Common myeloid progenitor, CD34-positive (primary cell): ENCODE measurements at regions of chrX and their contacts with region 1.

Region 1: DNA sequence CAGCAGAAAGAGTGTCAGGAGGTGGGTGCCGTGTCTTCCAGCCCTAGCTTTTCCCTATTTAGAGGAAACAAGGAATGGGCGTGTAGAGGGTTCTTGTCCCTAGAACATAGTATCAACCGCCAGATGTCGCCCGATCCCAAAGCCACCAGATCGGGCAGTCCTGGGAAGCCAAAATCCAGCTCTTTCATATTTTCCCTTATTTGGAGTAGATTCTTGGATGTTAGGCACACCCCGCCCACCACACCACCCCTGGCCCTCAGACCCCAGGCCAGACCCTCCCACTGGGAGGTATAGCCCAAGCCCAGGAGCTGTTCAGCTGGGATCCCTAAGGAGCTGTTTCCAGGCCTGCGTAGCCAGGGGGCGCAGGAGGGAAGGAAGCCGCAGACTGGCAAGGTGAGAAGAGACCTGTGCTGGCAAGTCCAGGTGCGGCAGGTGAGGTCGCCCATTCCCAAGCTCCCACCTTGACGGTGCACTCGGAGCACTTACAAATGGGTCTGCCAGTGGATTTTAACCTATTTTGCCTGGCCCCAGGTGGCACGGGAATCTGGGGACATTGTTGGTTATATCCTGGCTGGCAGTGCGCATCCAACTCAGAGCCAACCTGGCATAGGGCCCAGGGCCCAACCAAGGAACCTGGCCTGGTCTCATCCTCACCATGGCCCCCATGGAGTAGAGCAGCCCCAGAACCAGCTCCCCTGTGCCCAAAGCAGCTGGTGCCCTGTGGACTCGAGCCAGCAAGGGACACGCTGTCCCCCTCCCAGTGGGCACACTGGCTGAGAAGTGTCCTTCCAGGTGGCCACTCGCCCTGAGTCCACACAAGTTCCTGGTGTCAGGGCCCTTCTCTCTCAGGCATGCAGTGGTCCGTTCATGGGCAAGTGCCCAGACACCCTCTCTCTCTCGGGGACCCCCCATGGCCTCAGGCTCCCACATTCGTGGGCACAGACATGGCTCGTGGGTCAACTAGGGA is 811 bp downstream of the FLNA start:
- DNase-seq: peak in 2 of 3 donors; percentile 35 to 42
- H3K4me3 ChIP-seq: peak overlapping the region in 3 of 7 experiments; percentile 15 to 61 (median 35)
- H3K27ac ChIP-seq: no peak overlapping the region
- H3K4me1 ChIP-seq: peaks cover 3 to 49% (median 37%) of the 10 kb centered on the region in 4 experiments
- H3K27me3 ChIP-seq: peaks cover 0 to 14% (median 0%) of the 10 kb centered on the region in 5 experiments

Region 2: DNA sequence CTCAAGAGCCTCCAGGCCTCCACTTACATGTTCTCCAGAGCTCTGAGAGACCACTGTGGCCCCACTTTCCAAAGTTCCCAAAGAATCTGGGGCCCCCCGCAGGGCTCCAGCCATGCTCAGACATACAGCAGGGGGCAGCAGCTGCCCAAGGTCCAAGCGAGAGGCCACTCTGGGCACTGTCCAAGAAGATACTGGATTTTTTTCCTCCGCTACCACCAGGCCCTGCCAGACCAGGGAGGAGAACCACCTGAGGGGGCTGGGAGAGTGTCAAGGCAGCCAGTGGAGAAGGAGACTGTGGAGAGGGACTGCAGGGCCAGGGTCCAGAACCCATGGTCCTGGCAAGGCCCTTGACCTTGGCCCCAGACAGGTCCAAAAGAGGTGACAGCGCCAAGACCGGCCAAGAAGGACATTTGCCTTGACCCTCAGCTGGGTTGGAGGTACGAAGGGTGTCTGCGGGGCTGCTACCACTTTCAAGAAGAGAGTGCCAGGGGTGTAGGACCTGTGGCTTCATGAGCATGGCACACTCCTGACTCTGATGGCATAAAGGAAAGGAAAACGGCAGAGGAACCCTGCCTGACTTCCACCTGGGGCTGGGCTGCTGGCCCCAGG is 10.8 kb after region 1 on chrX:
- CTCF ChIA-PET with region 1: interaction called, 18 read pairs
- POLR2A ChIA-PET with region 1: interaction called, 3 read pairs
- DNase-seq: peak in 1 of 3 donors; percentile 45
- H3K4me3 ChIP-seq: no peak overlapping the region
- H3K27ac ChIP-seq: no peak overlapping the region
- H3K4me1 ChIP-seq: peaks cover 0 to 18% (median 14%) of the 10 kb centered on the region in 4 experiments
- H3K27me3 ChIP-seq: no peaks in the 10 kb centered on the region

Region 3: DNA sequence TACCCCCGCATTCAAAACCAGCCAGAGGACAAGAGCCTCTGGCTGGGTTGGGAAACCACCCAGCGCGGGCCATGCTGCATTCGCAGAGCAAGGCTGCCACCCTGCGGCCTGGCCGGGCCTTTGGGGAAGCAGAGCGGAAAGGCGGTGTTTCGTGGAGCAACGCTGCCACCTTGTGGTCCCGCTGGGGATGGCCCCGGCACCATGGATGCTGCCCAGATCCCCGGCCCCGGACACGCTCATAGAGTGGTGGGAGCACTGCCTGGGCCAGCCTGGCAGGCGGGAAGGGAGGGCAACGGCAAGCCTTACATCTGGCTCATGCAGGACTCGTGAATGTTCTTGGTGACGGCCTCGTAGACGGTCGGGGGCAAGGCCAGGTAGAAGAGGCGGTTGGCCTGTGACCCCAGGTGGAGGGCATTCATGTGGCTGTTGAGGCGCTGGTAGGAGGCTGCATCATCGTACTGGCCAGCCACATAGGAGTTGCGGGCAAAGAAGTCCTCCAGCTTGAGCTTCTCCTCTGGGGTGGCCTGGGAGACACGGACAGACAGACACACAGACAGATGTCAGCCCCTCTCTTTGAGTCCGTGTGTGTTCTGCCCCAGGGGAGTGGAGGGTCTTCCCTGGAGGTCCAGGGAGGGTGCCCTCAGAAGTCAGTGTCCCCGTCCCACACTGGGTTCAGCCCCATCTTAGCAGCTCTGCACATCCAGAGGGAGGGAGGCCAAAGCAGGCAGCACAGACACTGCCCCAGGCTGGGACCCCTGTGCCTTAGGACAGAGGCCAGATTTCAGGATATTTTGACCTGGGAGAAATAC is 161.4 kb after region 1 on chrX:
- CTCF ChIA-PET with region 1: interaction called, 19 read pairs
- POLR2A ChIA-PET with region 1: no interaction called
- DNase-seq: peak; percentile 73 to 93 (median 89)
- H3K4me3 ChIP-seq: no peak overlapping the region
- H3K27ac ChIP-seq: no peak overlapping the region
- H3K4me1 ChIP-seq: peaks cover 0 to 4% (median 0%) of the 10 kb centered on the region in 4 experiments
- H3K27me3 ChIP-seq: peaks cover 0 to 4% (median 0%) of the 10 kb centered on the region in 5 experiments

Region 4: GRCh38 chrX:154541724-154542467 is 168.3 kb after region 1 on chrX:
- CTCF ChIA-PET with region 1: interaction called, 19 read pairs
- POLR2A ChIA-PET with region 1: no interaction called
- DNase-seq: peak; percentile 89 to 95 (median 94)
- H3K4me3 ChIP-seq: peak overlapping the region in 4 of 7 experiments; percentile 19 to 43 (median 38)
- H3K27ac ChIP-seq: peak overlapping the region; percentile 43 to 82
- H3K4me1 ChIP-seq: peaks cover 7 to 58% (median 57%) of the 10 kb centered on the region in 4 experiments
- H3K27me3 ChIP-seq: no peaks in the 10 kb centered on the region